ENCODE measurements at regions of chr11 and their contacts with region 1.

Region 1: DNA sequence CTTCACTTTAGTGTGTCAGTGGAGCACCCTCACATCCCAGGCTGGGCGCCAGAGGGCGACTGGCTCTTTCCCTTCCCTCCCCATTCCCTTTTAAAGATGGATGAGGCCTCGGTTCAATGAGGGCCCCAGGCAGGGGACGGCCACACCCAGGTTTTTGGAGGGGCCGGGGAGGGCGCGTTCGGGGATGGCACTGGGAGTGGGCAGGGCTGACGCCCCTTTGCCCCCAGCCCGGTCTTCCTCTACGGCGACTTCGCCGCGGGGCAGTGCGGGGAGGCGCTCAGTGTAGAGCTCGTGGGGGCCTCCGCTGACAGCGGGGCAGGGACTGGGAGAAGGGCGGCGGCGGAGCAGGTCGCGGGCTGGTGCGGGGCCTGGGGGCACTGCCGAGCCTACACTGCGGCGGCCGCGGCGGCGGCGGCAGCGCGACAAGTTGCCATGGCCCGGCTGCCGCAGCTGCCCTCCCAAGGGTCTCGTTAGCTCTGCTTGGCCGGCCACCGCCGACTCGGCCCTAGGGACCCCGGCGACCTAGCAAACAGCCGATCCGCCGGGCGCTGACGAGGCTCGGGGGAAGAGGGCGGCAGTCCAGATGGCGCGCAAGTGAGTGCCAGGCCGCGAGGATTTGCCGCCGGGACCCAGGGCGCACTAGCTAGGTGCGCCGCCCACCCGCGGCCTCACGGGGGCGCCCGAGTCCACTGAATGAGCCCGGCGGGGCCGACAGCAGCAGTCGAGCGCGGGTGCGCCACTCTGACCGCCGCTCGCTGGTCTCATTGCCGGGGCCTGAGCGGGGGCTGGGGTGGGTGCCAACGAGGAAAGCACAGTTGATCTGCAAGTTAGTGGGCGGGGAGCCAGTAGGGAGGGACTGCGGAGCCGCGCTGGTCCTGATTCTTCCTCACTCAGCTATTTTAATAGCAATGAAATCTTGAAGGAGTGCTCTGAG is 92.7 kb downstream of the RRM1 start:
- DNase-seq: no peak
- H3K4me3 ChIP-seq: peak overlapping the region; percentile 67
- CTCF ChIP-seq: peak; percentile 97

Region 2: DNA sequence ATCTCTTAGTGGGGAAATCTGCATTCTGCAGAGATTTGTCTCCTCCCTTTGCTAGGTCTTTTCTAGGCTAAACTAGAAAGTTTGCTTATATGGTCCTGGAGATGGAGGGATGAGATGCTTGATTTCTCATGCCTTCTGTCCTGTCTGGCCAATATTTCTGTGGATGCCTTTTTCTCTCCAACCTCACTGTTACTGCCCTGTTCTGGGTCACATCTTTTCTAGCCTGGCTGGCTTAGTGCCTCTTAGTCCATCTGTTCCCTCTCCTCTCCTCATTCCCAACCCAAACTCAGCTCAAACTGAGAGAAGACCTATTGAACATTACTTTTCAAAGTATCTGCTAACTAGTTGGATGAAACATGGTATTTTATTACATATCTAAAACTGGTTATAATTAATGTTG is 30.8 kb before region 1 on chr11:
- CTCF ChIA-PET with region 1: interaction called, 10 read pairs
- POLR2A ChIA-PET with region 1: no interaction called
- DNase-seq: no peak
- H3K4me3 ChIP-seq: no peak overlapping the region
- CTCF ChIP-seq: no peak

Region 3: GRCh38 chr11:4203603-4204360 is 16.5 kb after region 1 on chr11:
- CTCF ChIA-PET with region 1: interaction called, 24 read pairs
- POLR2A ChIA-PET with region 1: no interaction called
- DNase-seq: no peak
- H3K4me3 ChIP-seq: no peak overlapping the region
- CTCF ChIP-seq: no peak

Region 4: GRCh38 chr11:4480574-4481566 is 293.5 kb after region 1 on chr11:
- CTCF ChIA-PET with region 1: interaction called, 14 read pairs
- POLR2A ChIA-PET with region 1: no interaction called
- DNase-seq: no peak
- H3K4me3 ChIP-seq: no peak overlapping the region
- CTCF ChIP-seq: no peak

Region 5: GRCh38 chr11:4496557-4497275 is 309.4 kb after region 1 on chr11:
- CTCF ChIA-PET with region 1: interaction called, 204 read pairs
- POLR2A ChIA-PET with region 1: no interaction called
- DNase-seq: no peak
- H3K4me3 ChIP-seq: no peak overlapping the region
- CTCF ChIP-seq: no peak

Region 6: GRCh38 chr11:4539603-4540219 is 352.4 kb after region 1 on chr11:
- CTCF ChIA-PET with region 1: interaction called, 123 read pairs
- POLR2A ChIA-PET with region 1: interaction called, 4 read pairs
- DNase-seq: no peak
- H3K4me3 ChIP-seq: no peak overlapping the region
- CTCF ChIP-seq: peak; percentile 51

Region 7: DNA sequence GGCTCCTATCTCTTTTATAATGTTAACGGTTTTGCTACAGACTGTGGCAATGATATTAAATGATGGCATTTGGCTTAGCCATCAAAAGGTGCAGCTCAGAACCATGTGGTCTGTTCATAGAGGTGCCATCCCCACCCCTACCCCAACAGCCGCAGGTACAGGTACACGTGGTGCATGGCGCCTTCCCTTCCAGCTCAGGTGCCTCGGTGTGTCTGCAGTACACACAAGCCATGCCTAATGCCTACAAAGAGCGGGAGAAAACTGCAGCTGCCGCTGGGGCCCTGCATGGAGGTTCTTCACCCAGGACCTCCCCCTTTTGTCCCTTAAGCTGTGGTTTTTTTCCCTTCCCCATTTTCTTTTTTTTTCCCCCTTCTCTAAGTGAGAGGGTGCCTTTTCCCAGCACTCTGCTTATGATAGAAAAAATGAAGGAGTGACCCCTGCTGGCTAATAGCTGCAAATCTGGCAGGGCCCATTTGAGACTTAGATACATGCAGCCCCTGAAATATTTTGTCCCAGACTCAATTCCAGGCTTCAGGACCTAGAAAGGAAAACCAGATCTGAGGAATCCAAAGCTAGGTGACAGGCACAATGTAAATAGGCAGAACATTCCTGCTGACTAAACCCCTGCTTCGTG is 364.1 kb after region 1 on chr11:
- CTCF ChIA-PET with region 1: interaction called, 24 read pairs
- POLR2A ChIA-PET with region 1: no interaction called
- DNase-seq: no peak
- H3K4me3 ChIP-seq: no peak overlapping the region
- CTCF ChIP-seq: no peak

Measured in AG04449 (cell line).